Cardiac septum (tissue), 1 donor: ENCODE measurements at regions of chr1 and their contacts with region 1.

Region 1: GRCh38 chr1:161177112-161177935 is at the start of gene B4GALT3:
- DNase-seq: peak; percentile 98
- total RNA-seq, gene B4GALT3: 22.2 TPM

Region 2: DNA sequence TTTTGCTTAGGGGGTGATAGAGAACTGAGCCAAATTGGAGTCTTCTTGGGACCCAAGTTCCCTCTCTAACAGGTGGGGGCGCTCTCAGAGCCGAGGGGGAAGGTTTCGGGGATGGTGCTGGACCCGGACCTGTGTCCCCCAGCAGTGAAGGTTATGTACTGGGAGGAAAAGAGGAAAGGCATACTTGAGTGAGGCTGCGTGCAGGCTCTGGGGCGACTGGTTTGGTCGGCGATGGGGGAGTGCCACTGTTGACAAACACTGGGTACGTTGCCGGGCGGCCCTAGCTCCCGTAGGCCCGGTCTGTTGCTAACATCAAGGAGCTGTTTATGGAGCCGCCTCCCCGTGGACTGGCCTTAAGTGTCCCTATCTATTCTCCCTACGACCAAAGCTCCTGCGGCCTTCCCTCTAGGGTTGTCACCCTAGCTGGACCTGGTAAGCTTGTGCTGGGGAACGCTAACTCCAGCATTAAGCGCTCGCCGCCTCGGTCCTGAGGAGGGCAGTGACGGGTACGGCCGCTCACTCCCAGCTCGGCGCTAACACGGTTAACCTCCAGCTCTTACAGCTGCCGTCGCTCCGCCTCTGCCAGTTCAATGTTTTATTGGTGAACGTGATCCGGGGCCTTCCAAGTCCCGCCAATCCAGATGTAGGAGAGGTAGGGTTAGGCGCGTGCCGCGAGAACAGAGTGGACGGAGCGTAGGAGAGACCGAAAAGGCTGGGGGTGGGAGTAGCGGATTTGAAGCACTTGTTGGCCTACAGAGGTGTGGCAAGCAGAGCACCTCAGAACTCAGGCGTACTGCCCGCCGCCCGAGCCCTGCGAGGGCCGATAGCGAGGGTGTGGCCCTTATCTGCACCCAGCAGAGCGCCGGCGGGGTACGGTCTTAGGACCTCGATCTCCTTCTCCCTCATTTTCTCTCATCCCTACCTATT is 11.3 kb before region 1 on chr1 and contains the start of gene PPOX:
- intact Hi-C with region 1: loop called (anchors 1 kb)
- DNase-seq: peak; percentile 98
- total RNA-seq, gene PPOX: 12.9 TPM